Naive thymus-derived CD4-positive, alpha-beta T cell (primary cell): ENCODE measurements at regions of chr15 and their contacts with region 1.

Region 1: DNA sequence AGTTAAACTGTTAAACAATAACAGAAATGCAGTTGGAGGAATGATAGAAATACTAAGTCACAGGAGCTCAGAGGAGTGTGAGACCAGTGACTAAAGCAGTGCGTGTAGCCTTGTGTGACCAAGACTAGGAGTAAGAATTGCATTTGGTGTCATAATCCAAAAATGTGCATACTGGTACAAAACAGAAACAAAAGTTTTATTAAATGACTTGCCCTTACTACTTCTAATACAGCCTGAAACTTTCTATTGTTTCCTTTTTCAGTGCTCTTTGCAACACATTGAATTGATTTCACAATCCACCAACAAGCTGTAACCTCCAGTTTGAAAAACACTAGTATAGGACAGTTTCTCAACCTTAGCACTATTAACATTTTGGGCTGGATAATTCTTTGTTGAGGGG is 17.1 kb downstream of the SNX1 start:
- DNase-seq: no peak
- ATAC-seq: peak; percentile 42
- H3K4me3 ChIP-seq: no peak overlapping the region
- H3K4me3 Mint-ChIP-seq: no peak overlapping the region
- H3K27ac ChIP-seq: no peak overlapping the region
- H3K27ac Mint-ChIP-seq: peak overlapping the region in 1 of 9 donors; percentile 18
- H3K4me1 ChIP-seq: peaks cover 6 to 12% of the 10 kb centered on the region in 2 donors
- H3K4me1 Mint-ChIP-seq: peaks cover 24 to 41% (median 39%) of the 10 kb centered on the region in 7 donors
- H3K27me3 ChIP-seq: no peaks in the 10 kb centered on the region
- H3K27me3 Mint-ChIP-seq: no peaks in the 10 kb centered on the region

Region 2: GRCh38 chr15:64100958-64101357 is 11.9 kb before region 1 on chr15:
- CTCF ChIA-PET with region 1: no interaction called
- POLR2A ChIA-PET with region 1: interaction called, 8 read pairs
- intact Hi-C with region 1: loop called in 1 of 2 experiments (anchors 1 kb)
- DNase-seq: no peak
- ATAC-seq: peak; percentile 19
- H3K4me3 ChIP-seq: no peak overlapping the region
- H3K4me3 Mint-ChIP-seq: peak overlapping the region in 2 of 10 donors; percentile 19 to 22
- H3K27ac ChIP-seq: no peak overlapping the region
- H3K27ac Mint-ChIP-seq: peak overlapping the region in 2 of 9 donors; percentile 41 to 67
- H3K4me1 ChIP-seq: peaks cover 18 to 20% of the 10 kb centered on the region in 2 donors
- H3K4me1 Mint-ChIP-seq: peaks cover 31 to 85% (median 69%) of the 10 kb centered on the region in 7 donors
- H3K27me3 ChIP-seq: no peaks in the 10 kb centered on the region
- H3K27me3 Mint-ChIP-seq: no peaks in the 10 kb centered on the region